Vagina (tissue), 2 donors: ENCODE measurements at regions of chr19 and their contacts with region 1.

Region 1: DNA sequence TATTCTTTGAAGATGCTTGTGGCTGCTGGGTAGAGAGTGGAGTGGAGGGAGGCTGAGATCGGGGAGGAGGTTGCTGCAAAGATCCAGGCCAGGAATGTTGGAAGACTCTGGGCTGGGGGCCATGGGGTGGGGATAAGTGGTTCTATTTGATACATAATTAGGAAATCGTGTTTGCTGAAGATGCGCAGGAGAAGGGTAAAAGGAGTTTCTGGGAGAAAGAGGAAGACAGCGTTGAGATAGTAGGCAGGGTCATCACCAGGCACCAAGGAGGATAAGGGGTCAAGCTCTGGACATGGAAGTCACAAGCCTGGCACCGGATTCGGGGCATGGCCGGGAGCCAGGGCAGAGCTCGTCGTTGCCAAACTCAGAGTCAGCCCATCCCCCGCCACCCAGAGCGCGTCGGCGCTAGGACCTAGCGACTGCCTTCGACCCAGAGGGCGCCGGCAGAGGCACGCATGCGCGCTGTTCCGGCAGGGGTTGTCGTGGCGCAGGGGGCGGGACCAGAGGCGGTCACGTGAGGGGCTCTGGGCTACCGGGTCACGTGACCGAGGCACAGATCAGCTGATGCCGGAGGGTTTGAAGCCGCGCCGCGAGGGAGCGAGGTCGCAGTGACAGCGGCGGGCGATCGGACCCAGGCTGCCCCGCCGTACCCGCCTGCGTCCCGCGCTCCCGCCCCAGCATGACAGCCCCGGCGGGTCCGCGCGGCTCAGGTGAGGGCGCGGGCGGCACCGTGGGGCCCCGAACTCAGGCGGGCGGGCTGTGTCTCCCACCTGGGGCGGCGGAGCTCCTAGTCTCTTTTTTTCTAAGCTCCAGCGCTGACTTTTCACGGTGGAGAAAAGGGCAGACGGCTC is at the start of gene MCOLN1:
- DNase-seq: peak in 1 of 2 donors; percentile 97
- H3K4me3 ChIP-seq: peak within 1 kb of the TSS; percentile 58 to 74
- H3K27ac ChIP-seq: peak within 1 kb of the TSS; percentile 77
- H3K4me1 ChIP-seq: peaks cover 26% of the 10 kb centered on the region
- H3K27me3 ChIP-seq: no peaks in the 10 kb centered on the region
- CTCF ChIP-seq: peak in 2 of 3 experiments; percentile 15 to 36
- POLR2A ChIP-seq: peak in 1 of 2 donors; percentile 33
- total RNA-seq, gene MCOLN1: 20.4 TPM

Region 2: DNA sequence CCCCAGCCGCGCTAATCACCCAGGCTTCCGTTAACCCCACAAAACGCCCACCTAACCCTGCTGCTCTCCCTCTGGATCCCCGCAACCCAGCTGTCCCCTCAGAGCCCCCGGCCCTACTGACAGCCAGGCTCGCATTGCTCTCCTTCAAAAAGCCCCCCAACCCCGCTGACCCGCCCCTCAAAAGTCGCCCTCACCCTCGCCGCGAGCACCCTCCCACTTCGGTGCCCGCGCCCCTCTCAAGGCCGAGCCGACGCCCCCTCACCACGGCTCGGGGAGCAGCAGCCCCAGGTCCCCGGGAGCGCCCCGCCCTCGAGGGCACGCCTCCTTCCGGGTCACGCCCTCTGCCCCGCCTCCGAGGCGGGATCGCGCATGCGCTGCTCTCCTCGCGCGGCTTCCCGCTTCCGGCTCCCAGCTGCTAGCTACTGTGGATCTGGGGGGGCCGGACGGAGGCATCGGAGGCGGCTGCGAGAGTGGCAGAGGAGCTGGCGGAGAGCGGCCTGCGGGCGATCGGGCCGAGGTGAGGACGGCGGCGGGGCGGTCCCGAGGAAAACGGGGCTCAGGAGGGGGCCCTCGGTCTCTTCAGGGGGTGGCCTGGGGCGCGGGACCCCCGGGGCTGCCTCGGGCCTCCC is 127.5 kb before region 1 on chr19:
- intact Hi-C with region 1: loop called (anchors 10 kb)
- DNase-seq: no peak
- H3K4me3 ChIP-seq: peak overlapping the region; percentile 97
- H3K27ac ChIP-seq: peak overlapping the region; percentile 82
- H3K4me1 ChIP-seq: peaks cover 24% of the 10 kb centered on the region
- H3K27me3 ChIP-seq: no peaks in the 10 kb centered on the region
- CTCF ChIP-seq: no peak
- POLR2A ChIP-seq: peak in 1 of 2 donors; percentile 41

Region 3: GRCh38 chr19:7471696-7472615 is 50.3 kb before region 1 on chr19:
- intact Hi-C with region 1: no loop called
- DNase-seq: no peak
- H3K4me3 ChIP-seq: no peak overlapping the region
- H3K27ac ChIP-seq: no peak overlapping the region
- H3K4me1 ChIP-seq: no peaks in the 10 kb centered on the region
- H3K27me3 ChIP-seq: no peaks in the 10 kb centered on the region
- CTCF ChIP-seq: no peak
- POLR2A ChIP-seq: no peak

Region 4: GRCh38 chr19:7535035-7535992 is 13.0 kb after region 1 on chr19 and contains the start of gene PNPLA6:
- intact Hi-C with region 1: loop called (anchors 1 kb)
- DNase-seq: peak in 1 of 2 donors; percentile 94
- H3K4me3 ChIP-seq: peak within 1 kb of the TSS; percentile 74 to 96
- H3K27ac ChIP-seq: peak within 1 kb of the TSS; percentile 92
- H3K4me1 ChIP-seq: peaks cover 19% of the 10 kb centered on the region
- H3K27me3 ChIP-seq: no peaks in the 10 kb centered on the region
- CTCF ChIP-seq: no peak
- POLR2A ChIP-seq: peak in 1 of 2 donors; percentile 44
- total RNA-seq, gene PNPLA6: 47.4 TPM